Calu3 (cell line): ENCODE measurements at regions of chr1 and their contacts with region 1.

Region 1: DNA sequence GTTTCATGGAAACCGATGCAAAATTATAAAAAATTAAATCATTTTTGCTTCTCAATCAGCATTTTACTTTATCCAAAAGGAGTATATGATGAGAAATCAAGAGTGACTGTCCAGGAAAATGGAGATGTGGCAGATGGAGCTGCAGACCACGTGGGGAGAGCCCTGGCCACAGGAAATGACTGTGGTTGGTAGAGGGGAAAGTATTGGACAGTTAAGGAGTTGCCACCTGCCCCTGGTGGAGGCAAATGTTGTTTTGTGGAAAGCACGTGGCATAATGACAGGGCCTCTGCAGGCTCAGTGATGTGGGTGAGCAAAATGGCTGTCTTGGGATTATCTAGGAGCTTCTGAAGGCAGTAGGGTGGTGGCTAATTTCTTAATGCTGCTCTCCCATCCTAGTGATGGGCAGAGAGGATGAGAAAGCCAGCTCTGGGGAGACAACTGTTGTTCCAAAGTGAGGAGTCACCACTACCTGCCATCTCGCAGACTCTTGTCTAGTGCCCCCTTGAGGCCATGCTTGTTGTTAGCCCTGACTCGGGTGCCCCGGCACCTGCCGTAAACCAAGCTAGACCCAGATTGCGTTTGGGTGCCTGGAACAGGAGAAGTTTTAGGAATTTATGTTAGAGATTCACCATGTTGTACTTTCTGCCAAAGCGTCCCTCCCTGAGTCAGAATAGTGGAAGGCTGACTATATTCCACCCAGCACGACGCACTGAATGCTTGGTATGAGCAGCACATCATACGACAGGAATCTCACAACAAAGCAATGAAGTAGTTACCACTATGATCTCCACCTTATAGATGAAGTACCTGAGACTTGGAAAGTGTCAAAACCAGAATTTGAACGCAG is 144.0 kb downstream of the ROR1 start:
- DNase-seq: peak; percentile 80
- H3K4me3 Mint-ChIP-seq: peak overlapping the region; percentile 57
- H3K27ac Mint-ChIP-seq: peak overlapping the region; percentile 83
- H3K4me1 Mint-ChIP-seq: peaks cover 93% of the 10 kb centered on the region
- H3K27me3 Mint-ChIP-seq: no peaks in the 10 kb centered on the region
- CTCF ChIP-seq: peak; percentile 78

Region 2: DNA sequence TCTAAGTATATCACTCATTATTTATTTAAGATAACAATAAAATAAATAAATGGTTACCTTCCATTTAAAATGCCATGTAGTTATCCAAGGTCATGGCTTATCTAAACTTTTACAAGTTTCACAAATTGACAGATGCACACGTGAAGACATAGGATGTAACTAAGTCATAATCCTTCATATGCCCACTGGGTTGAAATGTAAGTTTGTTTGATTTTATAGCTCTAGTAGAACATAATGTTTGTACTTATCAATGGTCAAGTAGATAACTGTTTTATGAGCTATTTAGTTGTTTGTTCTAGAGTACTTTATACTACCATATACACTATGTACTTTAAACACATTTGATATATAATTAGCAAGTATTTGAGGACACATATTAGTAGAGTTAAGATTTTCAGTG is 437.7 kb before region 1 on chr1:
- CTCF ChIA-PET with region 1: no interaction called
- intact Hi-C with region 1: no loop called
- DNase-seq: no peak
- H3K4me3 Mint-ChIP-seq: no peak overlapping the region
- H3K27ac Mint-ChIP-seq: no peak overlapping the region
- H3K4me1 Mint-ChIP-seq: no peaks in the 10 kb centered on the region
- H3K27me3 Mint-ChIP-seq: no peaks in the 10 kb centered on the region
- CTCF ChIP-seq: no peak

Region 3: GRCh38 chr1:63615768-63616420 is 301.9 kb before region 1 on chr1:
- CTCF ChIA-PET with region 1: no interaction called
- intact Hi-C with region 1: loop called (anchors 2 kb)
- DNase-seq: peak; percentile 79
- H3K4me3 Mint-ChIP-seq: no peak overlapping the region
- H3K27ac Mint-ChIP-seq: no peak overlapping the region
- H3K4me1 Mint-ChIP-seq: peaks cover 49% of the 10 kb centered on the region
- H3K27me3 Mint-ChIP-seq: no peaks in the 10 kb centered on the region
- CTCF ChIP-seq: peak; percentile 87

Region 4: DNA sequence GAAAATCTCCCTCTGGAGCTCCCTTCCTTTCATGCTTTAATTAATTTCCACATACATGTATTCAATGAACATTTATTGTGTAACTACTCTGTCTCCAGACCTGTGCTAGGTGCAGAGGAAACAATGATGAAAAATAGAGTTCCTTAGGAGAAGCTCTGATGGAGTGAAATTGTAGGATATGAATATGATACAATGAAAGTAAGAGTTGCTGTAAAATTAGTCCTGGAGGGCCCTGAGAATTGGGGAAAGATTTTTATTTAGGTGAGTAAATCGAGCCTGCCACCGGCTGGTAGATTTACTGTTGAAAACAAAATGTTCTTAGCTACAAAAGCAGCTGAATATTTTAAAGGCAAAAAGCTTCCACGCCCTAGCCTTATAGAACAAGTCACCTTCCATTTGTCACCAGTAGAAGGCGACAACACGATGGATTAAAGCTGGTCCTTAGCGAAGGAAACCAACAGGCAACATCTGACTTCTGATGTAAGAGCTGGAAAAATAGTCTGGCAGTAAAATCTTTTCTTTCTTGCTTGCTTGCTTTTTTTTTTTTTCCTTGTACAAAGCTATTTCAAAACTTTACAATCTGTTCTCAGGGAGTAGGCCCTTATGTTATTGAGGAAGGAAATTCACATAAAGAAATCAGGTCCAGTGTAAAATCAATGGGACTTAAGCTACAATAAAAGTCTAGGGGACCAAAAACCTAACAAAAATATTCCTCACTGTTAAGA is 225.9 kb before region 1 on chr1:
- CTCF ChIA-PET with region 1: interaction called, 13 read pairs
- intact Hi-C with region 1: loop called (anchors 2 kb)
- DNase-seq: peak; percentile 70
- H3K4me3 Mint-ChIP-seq: no peak overlapping the region
- H3K27ac Mint-ChIP-seq: peak overlapping the region; percentile 53
- H3K4me1 Mint-ChIP-seq: peaks cover 49% of the 10 kb centered on the region
- H3K27me3 Mint-ChIP-seq: no peaks in the 10 kb centered on the region
- CTCF ChIP-seq: peak; percentile 67

Region 5: DNA sequence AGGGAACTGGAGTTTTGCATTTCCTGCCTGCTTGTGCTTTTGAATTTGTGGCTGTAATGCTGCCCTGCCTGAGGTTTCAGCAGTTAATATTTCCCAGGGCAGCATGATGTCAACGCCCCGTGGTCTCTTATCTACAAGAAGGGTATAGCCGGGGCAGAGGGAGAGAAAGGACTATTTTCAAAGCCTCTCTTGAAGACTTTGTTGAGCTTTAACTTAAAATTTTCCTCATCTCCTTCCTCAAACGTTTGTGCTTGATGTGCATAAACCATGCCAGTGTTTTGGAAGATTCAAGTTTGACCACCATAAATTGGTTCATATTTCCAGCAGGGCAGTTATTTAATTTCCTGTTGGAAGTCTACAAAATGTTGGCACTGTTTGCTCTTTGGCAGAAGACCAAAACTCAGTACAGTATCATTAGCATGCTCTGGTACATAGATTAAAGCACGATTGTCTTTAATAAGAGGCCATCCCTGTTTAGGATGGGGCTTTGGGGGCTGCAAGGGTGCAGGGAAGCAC is 100.6 kb before region 1 on chr1:
- CTCF ChIA-PET with region 1: no interaction called
- intact Hi-C with region 1: loop called (anchors 2 kb)
- DNase-seq: peak; percentile 65
- H3K4me3 Mint-ChIP-seq: peak overlapping the region; percentile 53
- H3K27ac Mint-ChIP-seq: peak overlapping the region; percentile 51
- H3K4me1 Mint-ChIP-seq: peaks cover 87% of the 10 kb centered on the region
- H3K27me3 Mint-ChIP-seq: no peaks in the 10 kb centered on the region
- CTCF ChIP-seq: no peak

Region 6: DNA sequence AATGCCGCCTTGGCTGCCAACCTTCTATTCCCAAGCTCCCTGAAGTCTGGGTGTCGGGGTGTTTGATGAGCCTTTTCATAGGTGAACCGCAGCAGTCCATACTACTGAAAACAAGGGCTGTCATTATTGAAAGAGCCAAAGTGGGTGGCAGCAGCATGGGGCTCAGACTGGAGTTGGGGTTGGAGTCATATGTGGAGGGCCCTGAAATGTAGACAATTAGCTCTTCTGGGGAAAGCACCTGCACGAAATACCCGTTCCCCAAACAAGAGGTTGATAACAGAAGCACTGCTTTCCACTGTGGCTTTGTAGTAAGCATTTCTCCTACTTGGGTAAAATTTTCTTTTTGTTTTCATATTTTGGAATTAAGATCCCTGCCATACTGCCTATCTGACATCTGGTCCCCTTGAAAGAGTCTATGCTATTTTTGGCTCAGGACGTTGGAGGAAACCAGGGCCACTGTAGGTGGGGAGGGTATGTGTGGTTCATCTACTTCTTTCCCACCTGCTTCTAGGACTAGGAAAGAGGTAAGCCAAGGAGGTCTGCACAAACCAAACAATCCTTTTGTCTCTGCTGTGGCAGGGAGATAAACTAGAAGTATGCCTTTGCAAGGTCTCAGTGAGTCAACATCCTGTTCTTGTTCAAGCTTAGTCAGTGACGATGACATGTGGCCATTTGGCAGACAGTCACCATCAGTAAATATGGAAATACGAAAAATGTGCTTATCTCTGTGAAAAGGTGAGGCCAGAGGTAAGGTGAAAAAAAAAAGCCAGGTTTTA is 88.7 kb after region 1 on chr1:
- CTCF ChIA-PET with region 1: no interaction called
- intact Hi-C with region 1: loop called (anchors 1 kb)
- DNase-seq: peak; percentile 51
- H3K4me3 Mint-ChIP-seq: peak overlapping the region; percentile 59
- H3K27ac Mint-ChIP-seq: peak overlapping the region; percentile 92
- H3K4me1 Mint-ChIP-seq: peaks cover 65% of the 10 kb centered on the region
- H3K27me3 Mint-ChIP-seq: no peaks in the 10 kb centered on the region
- CTCF ChIP-seq: no peak